ENCODE measurements at regions of chr11 and their contacts with region 1.

Region 1: DNA sequence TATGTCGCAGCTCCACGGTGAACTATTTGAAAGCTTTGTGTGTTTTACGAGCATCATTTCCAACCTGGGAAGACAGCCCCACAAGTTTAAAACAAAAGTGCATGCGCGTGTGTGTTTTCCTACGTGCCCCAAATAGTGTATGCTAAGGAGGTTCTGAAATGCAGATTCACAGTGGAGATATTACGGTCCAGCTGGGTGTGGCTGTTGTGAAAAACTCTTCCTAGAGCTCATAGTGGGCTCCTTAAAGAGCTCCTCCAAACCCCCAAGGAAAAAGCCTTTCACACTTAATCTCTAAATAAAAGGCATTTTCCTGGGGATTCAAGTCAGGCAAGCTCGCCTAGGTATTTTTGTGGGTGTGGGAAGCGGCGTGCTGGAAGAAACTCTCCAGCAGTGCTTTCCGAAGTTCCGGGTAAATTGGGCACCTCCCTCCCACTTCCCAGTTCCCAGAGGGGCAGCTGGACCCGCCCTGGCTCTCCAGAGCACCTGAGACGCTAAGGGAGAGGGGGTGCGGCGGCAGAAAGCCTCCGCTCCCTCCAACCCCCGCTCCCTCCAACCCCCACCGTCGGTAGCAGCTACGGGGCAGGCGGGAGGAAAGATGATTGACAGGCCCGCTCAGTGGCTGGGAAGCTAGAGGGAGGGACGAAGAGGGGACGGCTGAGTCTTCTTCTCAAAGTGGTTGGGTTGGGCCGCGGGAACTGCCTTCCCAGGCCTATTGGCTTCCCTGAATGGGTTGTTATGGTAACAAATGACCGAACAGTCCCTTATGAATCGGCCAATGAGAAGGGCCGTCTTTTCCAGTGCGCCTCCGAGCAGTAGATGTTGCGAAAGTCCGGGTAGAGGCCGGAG is 558 bp upstream of the PCF11 start:
- DNase-seq: no peak
- H3K4me3 Mint-ChIP-seq: peak overlapping the region; percentile 100
- H3K27ac Mint-ChIP-seq: peak overlapping the region; percentile 100
- H3K4me1 Mint-ChIP-seq: peaks cover 28% of the 10 kb centered on the region
- H3K27me3 Mint-ChIP-seq: no peaks in the 10 kb centered on the region

Region 2: DNA sequence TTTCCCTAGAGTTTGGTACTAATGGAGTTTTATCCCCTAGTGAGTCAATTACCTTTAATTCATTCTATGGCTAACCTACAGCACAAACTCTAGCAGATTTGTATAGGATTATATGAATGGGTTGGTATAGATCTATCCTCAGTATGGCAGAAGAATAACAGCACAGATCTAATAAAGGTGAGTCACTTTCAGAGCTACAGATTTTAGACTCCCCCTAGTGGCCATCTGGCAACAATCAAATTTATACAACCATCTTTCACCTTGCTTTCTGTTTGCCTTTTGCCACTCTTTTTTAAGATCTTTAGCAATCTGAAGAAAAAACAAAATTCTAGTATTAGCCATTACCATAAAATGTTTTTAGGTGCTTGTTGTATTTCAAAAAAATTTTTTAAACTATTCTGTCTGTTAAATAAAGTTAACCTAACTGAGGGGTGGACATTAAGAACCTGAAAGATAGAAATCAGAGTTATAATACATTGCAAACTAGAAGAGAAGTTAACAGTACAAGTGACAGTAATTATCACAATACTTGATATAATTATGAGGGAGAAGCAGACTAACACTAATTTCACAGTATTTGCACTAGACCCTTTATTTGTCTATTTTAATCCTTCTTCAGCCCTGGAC is 229.0 kb before region 1 on chr11:
- intact Hi-C with region 1: loop called (anchors 5 kb)
- DNase-seq: peak; percentile 78
- H3K4me3 Mint-ChIP-seq: no peak overlapping the region
- H3K27ac Mint-ChIP-seq: no peak overlapping the region
- H3K4me1 Mint-ChIP-seq: peaks cover 15% of the 10 kb centered on the region
- H3K27me3 Mint-ChIP-seq: no peaks in the 10 kb centered on the region

Region 3: DNA sequence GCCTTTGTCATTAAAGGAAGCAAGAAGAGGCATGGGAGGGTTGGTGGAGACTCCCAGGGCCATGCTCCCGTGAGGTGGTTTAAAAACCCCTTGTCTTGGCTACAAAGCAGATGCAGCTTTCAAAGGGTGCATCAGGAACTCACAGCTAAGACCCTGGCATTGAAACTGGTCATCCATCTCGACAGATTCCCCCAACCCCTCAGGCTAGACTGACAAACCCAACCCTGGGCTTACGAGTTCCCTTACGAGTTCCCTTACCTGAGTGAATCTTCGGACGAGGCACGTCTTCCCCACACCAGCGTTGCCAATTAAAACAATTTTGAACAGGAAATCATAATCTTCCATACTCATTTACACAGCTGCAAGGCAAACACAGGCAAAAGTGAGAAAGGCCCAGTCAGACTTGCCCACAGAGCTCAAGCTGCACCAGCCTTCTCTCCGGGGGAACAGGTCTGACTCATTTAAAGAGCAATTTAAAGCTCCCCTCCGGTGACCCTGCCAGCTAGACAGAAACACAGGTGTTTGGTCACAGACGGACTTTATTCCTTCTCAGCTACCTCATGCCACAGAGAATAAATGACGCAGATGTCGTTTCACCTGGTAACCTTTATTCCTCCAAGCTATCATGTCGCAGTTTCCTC is 159.3 kb before region 1 on chr11:
- intact Hi-C with region 1: loop called (anchors 1 kb)
- DNase-seq: no peak
- H3K4me3 Mint-ChIP-seq: no peak overlapping the region
- H3K27ac Mint-ChIP-seq: peak overlapping the region; percentile 35
- H3K4me1 Mint-ChIP-seq: peaks cover 35% of the 10 kb centered on the region
- H3K27me3 Mint-ChIP-seq: no peaks in the 10 kb centered on the region

Region 4: GRCh38 chr11:83115551-83115950 is 40.8 kb before region 1 on chr11:
- intact Hi-C with region 1: loop called (anchors 2 kb)
- DNase-seq: no peak
- H3K4me3 Mint-ChIP-seq: peak overlapping the region; percentile 57
- H3K27ac Mint-ChIP-seq: no peak overlapping the region
- H3K4me1 Mint-ChIP-seq: peaks cover 22% of the 10 kb centered on the region
- H3K27me3 Mint-ChIP-seq: peaks cover 3% of the 10 kb centered on the region

Region 5: DNA sequence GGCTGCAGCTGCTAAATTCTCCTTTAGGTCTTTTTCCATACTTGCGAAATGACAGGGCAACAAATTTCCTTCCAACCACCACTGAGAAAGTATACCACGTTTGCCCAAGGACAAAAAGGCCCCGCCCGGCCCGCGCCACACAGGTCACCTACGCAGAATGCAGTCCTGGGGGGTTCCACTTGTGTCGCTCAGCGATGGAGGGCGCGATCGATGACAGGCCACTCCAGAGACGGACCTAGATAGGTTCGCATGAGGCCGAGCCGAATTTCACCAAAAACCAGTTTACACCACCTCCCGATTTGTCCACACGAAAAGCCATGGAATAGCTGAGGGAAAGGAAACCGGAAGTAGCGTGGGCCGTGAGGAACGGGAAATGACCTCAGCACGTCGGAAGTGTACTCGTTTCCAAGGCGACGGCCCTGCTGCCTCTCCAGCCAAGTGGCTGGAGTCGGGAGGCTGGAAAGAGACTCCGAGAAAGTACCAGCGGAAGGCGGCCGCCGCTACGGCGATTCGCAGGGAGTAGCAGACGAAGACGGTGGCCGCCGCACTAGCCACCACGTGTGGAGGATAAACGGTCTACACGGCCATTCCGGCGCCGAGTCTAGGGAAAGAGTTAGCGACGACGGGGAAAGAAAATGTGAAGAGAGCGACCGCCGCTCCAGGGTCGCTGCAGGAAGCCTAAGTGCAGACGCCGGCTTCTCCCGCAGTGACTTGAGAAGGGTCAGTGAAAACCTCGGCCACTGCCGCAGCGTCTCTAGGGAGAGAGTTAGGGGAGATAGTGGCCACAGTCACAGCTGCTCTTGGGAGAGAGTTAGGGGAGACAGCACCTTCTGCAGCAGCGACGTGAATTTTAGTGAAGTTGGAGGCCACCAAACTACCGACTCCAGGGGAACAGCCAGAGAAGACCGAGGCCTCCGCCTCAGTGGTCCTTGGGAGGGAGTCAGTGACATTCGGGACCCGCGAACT is 37.2 kb after region 1 on chr11 and contains the start of gene ANKRD42:
- intact Hi-C with region 1: loop called (anchors 1 kb)
- DNase-seq: peak; percentile 96
- H3K4me3 Mint-ChIP-seq: peak within 1 kb of the TSS; percentile 95
- H3K27ac Mint-ChIP-seq: peak within 1 kb of the TSS; percentile 90
- H3K4me1 Mint-ChIP-seq: peaks cover 33% of the 10 kb centered on the region
- H3K27me3 Mint-ChIP-seq: no peaks in the 10 kb centered on the region
- total RNA-seq, gene ANKRD42: 4.0 and 4.1 TPM in 2 replicates

Region 6: DNA sequence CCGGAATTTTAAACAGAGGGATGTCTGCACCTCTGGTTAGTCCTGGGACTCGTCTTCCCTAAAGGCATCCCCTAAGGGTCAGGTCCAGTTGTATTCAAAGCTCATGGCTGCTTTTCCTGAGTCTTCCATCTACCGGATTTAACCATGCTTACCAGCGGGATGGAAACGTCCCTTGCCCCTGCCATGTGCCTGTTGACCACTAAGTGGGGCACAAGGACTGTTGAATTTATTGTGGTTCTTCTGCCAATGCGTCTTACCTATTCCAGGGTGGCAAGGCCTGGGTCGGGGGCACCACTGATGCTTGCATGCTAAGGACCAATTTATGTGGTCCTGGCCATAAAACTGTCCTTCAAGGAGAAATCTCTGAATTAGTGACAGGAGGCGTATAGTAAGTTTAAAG is 62.7 kb after region 1 on chr11:
- intact Hi-C with region 1: no loop called
- DNase-seq: peak; percentile 47
- H3K4me3 Mint-ChIP-seq: no peak overlapping the region
- H3K27ac Mint-ChIP-seq: no peak overlapping the region
- H3K4me1 Mint-ChIP-seq: no peaks in the 10 kb centered on the region
- H3K27me3 Mint-ChIP-seq: peaks cover 11% of the 10 kb centered on the region

Measured in activated CD4-positive, alpha-beta T cell treated with anti-CD3 and anti-CD28 coated beads, Interleukin-2, amount 10 ng/mL, durations not matched to agents 24 days and 14 days (primary cell).